ENCODE measurements at regions of chr5 and their contacts with region 1.

Region 1: GRCh38 chr5:119367502-119368237 is 11.9 kb downstream of the TNFAIP8 start:
- DNase-seq: no peak
- H3K4me3 Mint-ChIP-seq: peak overlapping the region; percentile 84
- H3K27ac Mint-ChIP-seq: peak overlapping the region; percentile 95
- H3K4me1 Mint-ChIP-seq: peaks cover 85% of the 10 kb centered on the region
- H3K27me3 Mint-ChIP-seq: no peaks in the 10 kb centered on the region

Region 2: DNA sequence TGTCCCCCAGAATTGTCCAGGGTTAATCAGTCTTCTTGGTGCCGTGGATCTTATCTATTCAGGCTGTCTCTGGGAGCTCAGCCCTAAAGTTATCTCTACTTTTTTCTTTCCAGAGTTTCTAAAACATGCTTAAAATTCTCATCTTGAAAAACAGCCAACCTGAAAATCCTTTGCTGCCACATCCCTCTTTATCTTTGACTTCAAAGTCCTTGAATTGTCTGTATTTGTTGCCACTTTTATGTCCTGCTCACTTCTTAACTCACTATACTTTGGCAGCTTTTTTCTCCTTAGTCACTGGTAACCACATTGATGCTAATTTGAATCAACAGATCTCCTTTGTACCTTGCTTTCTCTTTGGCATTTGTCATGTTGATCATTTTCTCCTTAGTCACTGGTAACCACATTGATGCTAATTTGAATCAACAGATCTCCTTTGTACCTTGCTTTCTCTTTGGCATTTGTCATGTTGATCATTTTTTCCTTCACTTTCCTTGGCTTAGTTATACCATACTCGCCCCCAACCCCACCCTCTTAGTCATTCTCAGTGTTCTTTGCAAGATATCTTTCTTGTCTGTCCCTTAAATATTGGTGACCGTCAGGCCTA is 288.2 kb before region 1 on chr5:
- intact Hi-C with region 1: loop called (anchors 1 kb)
- DNase-seq: peak; percentile 25
- H3K4me3 Mint-ChIP-seq: peak overlapping the region; percentile 23
- H3K27ac Mint-ChIP-seq: peak overlapping the region; percentile 70
- H3K4me1 Mint-ChIP-seq: peaks cover 50% of the 10 kb centered on the region
- H3K27me3 Mint-ChIP-seq: no peaks in the 10 kb centered on the region

Region 3: DNA sequence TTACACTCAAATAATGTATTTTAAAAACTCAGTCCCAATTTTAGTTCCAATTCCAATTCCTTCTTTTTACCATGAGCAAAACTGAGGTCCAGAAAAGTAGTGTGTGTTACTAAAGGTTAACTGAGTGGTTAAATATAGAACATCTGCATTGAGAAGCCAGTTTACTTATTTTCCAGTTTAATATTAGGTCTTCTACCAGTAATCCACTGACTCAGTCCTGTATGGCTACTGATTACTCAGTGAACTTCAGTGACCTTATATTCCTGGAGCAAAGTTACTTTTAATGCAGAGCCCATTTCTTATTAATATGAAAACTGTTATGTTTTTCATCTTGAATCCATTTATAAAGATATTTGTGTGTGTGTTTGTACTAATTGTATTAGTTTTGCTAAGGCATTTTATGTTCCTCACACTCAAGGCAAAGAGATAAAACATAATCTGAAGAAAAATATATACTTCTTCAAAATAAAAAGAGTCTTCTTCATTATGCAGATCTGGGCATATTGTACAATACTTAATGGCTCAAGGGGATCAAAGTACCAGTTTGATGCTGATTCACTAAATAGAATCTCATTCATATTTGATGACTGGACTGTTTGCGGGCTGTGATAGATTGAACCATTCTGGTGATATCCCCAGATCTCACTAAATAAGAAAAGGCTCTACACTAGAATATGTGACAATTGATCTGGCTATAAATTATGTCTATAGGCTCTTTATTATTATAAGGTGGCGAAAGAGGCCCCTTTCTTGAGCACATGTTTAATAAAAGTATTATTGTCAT is 235.9 kb before region 1 on chr5:
- intact Hi-C with region 1: no loop called
- DNase-seq: no peak
- H3K4me3 Mint-ChIP-seq: no peak overlapping the region
- H3K27ac Mint-ChIP-seq: no peak overlapping the region
- H3K4me1 Mint-ChIP-seq: no peaks in the 10 kb centered on the region
- H3K27me3 Mint-ChIP-seq: no peaks in the 10 kb centered on the region

Region 4: DNA sequence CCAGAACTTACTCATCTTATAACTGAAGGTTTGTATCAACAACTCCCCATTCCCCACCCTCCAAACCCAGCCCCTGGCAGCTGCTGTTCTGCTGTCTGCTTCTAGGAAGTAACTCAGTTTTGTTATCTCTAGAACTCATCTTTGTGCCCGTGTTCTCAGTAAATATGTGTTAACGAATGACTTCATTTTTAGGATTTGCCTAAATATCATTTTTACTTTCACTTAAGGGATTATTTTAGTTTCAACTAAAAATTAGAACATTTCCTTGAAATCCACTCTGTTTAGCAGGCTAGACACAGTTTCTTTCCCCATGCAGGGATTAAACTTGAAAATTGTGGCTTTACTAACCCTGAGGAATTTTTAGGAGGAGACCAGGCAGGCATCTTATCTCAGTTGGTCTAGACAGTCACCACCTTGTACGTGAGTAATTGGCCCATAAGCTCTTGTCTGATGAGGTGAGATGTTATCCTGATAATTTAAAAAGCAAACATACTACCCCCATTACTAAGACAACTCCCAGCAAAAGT is 80.1 kb before region 1 on chr5:
- intact Hi-C with region 1: loop called (anchors 5 kb)
- DNase-seq: no peak
- H3K4me3 Mint-ChIP-seq: peak overlapping the region; percentile 72
- H3K27ac Mint-ChIP-seq: peak overlapping the region; percentile 93
- H3K4me1 Mint-ChIP-seq: peaks cover 99% of the 10 kb centered on the region
- H3K27me3 Mint-ChIP-seq: no peaks in the 10 kb centered on the region

Region 5: DNA sequence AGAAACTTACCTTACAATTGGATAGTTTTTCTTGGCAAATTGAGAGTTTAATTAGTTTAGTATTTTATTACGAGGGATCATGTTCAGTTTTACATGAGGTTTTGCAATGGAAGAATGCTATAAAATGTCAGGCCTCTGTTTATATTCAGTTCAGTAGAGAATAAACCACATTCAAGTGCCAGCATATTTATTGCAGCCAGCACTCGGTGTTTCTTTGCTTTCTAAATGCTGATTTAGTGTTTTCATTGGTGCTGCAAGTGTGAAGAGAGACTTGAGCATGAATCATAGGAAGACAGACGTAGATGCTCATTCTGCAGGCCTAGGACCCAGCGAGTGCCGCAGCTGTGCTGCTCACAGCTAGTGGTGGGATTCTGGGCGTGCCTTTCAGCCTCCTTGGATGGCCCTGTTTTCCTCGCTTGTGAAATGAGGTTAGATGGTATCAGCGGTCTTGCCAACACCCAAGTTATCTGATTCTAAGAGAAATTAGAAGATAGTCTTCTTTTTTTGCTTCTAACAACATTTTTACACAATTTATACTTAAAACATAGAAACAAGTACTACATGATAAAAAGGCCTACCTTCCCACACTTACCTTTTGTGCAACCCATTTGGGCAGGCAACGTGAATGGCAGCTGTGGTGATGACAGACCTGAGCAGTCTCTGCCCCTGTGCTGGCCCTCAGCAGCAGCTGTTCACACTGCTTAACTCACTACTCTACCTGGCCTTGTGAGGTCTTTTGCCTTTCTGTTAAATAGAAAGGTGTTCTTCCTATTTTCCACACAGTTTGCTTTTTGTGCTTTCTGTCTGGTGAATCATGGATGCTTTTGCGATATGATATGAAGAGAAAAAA is 38.7 kb before region 1 on chr5:
- intact Hi-C with region 1: loop called (anchors 1 kb)
- DNase-seq: peak; percentile 52
- H3K4me3 Mint-ChIP-seq: peak overlapping the region; percentile 52
- H3K27ac Mint-ChIP-seq: peak overlapping the region; percentile 95
- H3K4me1 Mint-ChIP-seq: peaks cover 91% of the 10 kb centered on the region
- H3K27me3 Mint-ChIP-seq: no peaks in the 10 kb centered on the region

Region 6: DNA sequence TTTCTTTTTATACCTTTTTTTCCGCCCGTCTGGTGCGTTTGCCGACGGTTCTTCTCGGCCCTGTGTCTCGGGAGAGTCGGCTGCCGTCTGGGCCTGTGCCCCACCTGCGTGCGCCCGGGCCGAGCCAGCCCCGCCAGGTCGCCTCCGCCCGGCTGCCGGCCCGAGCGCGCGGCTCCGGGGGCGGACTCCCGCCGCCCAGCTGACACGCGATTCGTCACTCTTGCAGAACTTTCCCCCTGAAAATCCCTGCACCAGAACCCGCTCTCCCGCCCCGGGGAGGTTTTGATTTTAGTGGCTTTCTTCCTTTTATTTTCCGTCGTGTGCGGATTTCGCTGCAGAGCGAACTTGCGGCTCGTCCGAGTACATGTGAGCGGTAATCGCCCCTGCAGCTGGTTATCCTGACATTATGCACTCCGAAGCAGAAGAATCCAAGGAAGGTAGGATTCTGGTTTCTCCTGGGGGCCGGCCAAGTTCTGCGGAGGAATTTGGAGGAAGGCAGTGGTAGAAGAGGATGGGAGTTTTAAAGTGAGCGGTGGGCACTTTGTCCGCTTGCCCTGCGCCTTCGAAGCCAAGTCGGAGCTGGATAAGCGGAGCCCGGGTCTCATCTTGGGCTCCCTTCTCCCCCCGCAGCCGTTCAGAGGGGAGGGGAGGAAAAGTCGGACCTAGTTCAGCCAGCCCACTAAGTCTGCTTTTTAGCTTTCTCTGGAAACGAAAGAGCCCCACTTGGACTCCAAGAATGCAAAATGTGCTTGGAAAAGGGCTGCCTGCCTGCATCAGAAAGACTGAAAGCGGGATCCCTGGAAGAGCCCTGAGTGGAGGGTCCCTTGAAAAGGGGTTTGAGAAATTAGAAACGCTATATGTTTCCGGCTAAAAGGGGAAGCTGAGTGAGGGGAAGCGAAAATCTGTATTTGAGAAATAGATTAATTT is 11.7 kb before region 1 on chr5 and contains the start of gene TNFAIP8:
- intact Hi-C with region 1: loop called (anchors 1 kb)
- DNase-seq: peak; percentile 64
- H3K4me3 Mint-ChIP-seq: peak within 1 kb of the TSS; percentile 95
- H3K27ac Mint-ChIP-seq: peak within 1 kb of the TSS; percentile 91
- H3K4me1 Mint-ChIP-seq: peaks cover 74% of the 10 kb centered on the region
- H3K27me3 Mint-ChIP-seq: no peaks in the 10 kb centered on the region
- total RNA-seq, gene TNFAIP8: 214 and 219 TPM in 2 replicates

Measured in activated T-helper 1 cell treated with anti-CD3 and anti-CD28 coated beads, Interleukin-12 subunit alpha, Interleukin-12 subunit beta, Interleukin-2, Interleukin-4 antibody, amounts not matched to agents 30 ng/mL and 10 ng/mL and 1 ng/mL, durations not matched to agents 14 hours and 24 hours and 36 hours (primary cell).